HEK293 (cell line): ENCODE measurements at regions of chr6 and their contacts with region 1.

Region 1: DNA sequence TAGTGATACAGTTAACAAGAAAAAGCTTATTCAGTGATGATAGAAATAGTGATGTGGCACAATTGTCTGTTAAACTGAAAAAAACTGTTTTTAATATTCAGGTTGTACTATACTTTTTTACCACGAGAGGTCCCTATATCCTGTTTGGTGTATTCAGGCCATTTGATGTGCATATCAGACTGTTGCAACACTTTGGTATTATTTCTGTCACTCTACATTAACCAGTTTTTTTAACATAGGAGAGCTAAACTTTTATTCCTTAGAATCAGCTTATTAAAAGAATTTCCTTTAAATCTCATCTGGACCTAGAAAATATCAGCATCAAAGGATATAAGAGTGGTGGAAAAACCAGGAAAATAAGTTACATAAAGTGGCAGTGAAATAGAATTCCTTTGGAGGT is 36.8 kb downstream of the TSPYL4 start:
- H3K4me3 ChIP-seq: no peak overlapping the region
- H3K27ac ChIP-seq: no peak overlapping the region
- H3K4me1 ChIP-seq: no peaks in the 10 kb centered on the region
- CTCF ChIP-seq: peak; percentile 14; the same call in 1 of the 2 replicates

Region 2: GRCh38 chr6:115947964-115948541 is 269.0 kb before region 1 on chr6:
- CTCF ChIA-PET with region 1: no interaction called
- POLR2A ChIA-PET with region 1: no interaction called
- H3K4me3 ChIP-seq: no peak overlapping the region
- H3K27ac ChIP-seq: no peak overlapping the region
- H3K4me1 ChIP-seq: no peaks in the 10 kb centered on the region
- CTCF ChIP-seq: no peak

Region 3: GRCh38 chr6:115969207-115969929 is 247.7 kb before region 1 on chr6:
- CTCF ChIA-PET with region 1: no interaction called
- POLR2A ChIA-PET with region 1: no interaction called
- H3K4me3 ChIP-seq: no peak overlapping the region
- H3K27ac ChIP-seq: no peak overlapping the region
- H3K4me1 ChIP-seq: no peaks in the 10 kb centered on the region
- CTCF ChIP-seq: no peak

Region 4: GRCh38 chr6:116118608-116119007 is 98.5 kb before region 1 on chr6:
- CTCF ChIA-PET with region 1: interaction called, 13 read pairs
- POLR2A ChIA-PET with region 1: no interaction called
- H3K4me3 ChIP-seq: no peak overlapping the region
- H3K27ac ChIP-seq: no peak overlapping the region
- H3K4me1 ChIP-seq: no peaks in the 10 kb centered on the region
- CTCF ChIP-seq: no peak

Region 5: GRCh38 chr6:116159782-116160524 is 57.1 kb before region 1 on chr6:
- CTCF ChIA-PET with region 1: no interaction called
- POLR2A ChIA-PET with region 1: no interaction called
- H3K4me3 ChIP-seq: no peak overlapping the region
- H3K27ac ChIP-seq: no peak overlapping the region
- H3K4me1 ChIP-seq: no peaks in the 10 kb centered on the region
- CTCF ChIP-seq: no peak

Region 6: GRCh38 chr6:116206231-116206903 is 10.7 kb before region 1 on chr6:
- CTCF ChIA-PET with region 1: interaction called, 57 read pairs
- POLR2A ChIA-PET with region 1: no interaction called
- H3K4me3 ChIP-seq: no peak overlapping the region
- H3K27ac ChIP-seq: no peak overlapping the region
- H3K4me1 ChIP-seq: peaks cover 6% of the 10 kb centered on the region
- CTCF ChIP-seq: no peak

Region 7: DNA sequence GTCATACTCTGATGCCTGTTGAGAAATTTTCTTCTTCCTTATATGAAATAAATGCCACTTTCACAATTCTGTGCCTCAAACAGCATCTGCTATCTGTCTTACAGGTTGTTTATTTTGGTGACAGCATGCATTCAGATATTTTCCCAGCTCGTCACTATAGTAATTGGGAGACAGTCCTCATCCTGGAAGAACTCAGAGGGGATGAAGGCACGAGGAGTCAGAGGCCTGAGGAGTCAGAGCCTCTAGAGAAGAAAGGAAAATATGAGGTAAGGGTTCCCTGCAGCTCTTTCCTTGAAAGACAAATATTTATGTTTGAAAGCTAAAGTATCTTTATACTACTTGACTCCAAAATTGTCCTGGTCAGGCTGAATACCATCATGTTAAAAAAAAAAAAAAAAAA is 21.0 kb after region 1 on chr6:
- CTCF ChIA-PET with region 1: interaction called, 60 read pairs
- POLR2A ChIA-PET with region 1: no interaction called
- H3K4me3 ChIP-seq: no peak overlapping the region
- H3K27ac ChIP-seq: no peak overlapping the region
- H3K4me1 ChIP-seq: no peaks in the 10 kb centered on the region
- CTCF ChIP-seq: no peak

Region 8: DNA sequence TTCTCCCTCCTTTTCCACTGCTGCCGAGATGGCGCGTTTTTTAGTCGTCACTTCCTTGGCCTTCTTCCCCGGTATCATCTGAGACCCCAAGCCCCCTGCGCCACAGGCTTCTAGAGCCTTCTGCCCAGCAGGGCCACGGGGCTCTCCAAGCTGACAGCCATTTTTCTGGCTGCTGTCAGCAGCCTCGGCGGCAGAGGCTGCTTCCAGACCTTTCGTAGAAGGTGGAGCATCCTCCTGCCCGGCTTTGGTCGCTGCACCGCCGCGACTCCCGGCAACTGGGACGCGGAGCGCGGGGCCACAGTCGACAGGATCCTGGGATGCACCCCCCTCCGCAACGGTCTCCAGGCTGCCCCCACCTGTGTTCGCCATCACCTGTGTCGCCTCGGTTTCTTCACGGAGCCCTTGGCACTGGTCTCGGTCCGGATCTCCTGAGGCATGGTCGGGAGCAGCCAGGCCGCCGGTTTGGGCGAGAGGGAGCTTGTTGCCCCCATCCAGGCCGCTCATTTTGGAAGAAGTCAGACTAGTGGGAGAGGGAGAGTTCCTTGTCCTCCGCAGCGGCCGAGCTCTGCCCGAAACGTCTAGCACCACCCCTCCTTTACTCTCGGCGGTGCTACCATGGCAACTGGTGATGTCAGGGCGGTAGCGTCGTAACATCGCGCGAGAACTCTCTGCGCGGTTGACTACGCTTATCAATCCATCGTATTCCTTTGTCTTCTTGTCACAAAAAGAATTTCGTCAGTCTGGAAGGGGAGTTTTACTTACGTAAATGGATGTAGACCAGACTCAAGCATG is 36.6 kb after region 1 on chr6 and contains the start of gene TSPYL4:
- CTCF ChIA-PET with region 1: interaction called, 26 read pairs
- POLR2A ChIA-PET with region 1: no interaction called
- H3K4me3 ChIP-seq: peak within 1 kb of the TSS; percentile 88
- H3K27ac ChIP-seq: peak within 1 kb of the TSS; percentile 69
- H3K4me1 ChIP-seq: peaks cover 11% of the 10 kb centered on the region; the same call in 1 of the 2 replicates
- CTCF ChIP-seq: 0 out of 2 replicates have a peak, but pooled peaks have one; percentile 12

Region 9: DNA sequence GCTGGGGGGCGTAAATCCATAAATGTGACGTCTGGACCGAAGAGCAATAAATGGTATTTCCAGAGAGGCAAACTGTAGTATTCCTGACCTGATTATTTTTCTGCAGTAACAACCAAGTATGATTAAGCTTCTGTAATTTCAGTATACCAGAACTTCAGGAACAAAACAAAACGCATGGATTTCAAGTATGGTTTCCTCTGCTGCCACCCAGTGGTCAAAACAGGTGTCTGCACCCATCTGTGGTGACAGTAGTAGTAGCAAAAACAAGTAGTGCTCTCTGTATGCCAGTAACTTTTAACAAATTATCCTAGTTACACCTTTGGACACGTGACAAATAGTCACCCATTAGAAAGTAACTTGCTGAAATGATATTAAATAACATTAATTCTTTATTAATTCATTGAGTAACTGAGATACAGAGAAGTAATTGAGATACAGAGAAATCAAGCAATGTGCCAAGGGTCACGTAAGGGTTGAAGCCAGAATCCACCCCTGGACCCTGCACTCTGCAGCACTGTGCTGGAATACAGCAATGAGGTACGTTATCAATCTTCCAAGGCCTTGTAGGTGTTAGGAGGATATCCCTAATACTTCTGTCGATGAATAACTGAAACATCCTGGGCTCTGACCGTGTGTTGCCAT is 344.4 kb after region 1 on chr6:
- CTCF ChIA-PET with region 1: interaction called, 22 read pairs
- POLR2A ChIA-PET with region 1: no interaction called
- H3K4me3 ChIP-seq: no peak overlapping the region
- H3K27ac ChIP-seq: no peak overlapping the region
- H3K4me1 ChIP-seq: peaks cover 4% of the 10 kb centered on the region; the same call in 1 of the 2 replicates
- CTCF ChIP-seq: peak; percentile 48; the same call in 1 of the 2 replicates